ENCODE measurements at regions of chr20 and their contacts with region 1.

Region 1: GRCh38 chr20:5222919-5223634 is 93.7 kb downstream of the PROKR2 start:
- DNase-seq: peak; percentile 76
- ATAC-seq: peak; percentile 51
- H3K4me3 Mint-ChIP-seq: no peak overlapping the region
- H3K27ac Mint-ChIP-seq: no peak overlapping the region
- H3K4me1 Mint-ChIP-seq: no peaks in the 10 kb centered on the region
- H3K27me3 Mint-ChIP-seq: no peaks in the 10 kb centered on the region

Region 2: GRCh38 chr20:5126512-5127203 is 96.4 kb before region 1 on chr20 and contains the start of gene CDS2:
- CTCF ChIA-PET with region 1: interaction called, 29 read pairs
- DNase-seq: peak; percentile 100
- ATAC-seq: peak; percentile 90
- H3K4me3 Mint-ChIP-seq: peak within 1 kb of the TSS; percentile 97
- H3K27ac Mint-ChIP-seq: peak within 1 kb of the TSS; percentile 96
- H3K4me1 Mint-ChIP-seq: peaks cover 54% of the 10 kb centered on the region
- H3K27me3 Mint-ChIP-seq: no peaks in the 10 kb centered on the region
- total RNA-seq, gene CDS2: 62.2 to 63.5 TPM